Psoas muscle (tissue), 8 donors: ENCODE measurements at regions of chr16 and their contacts with region 1.

Region 1: DNA sequence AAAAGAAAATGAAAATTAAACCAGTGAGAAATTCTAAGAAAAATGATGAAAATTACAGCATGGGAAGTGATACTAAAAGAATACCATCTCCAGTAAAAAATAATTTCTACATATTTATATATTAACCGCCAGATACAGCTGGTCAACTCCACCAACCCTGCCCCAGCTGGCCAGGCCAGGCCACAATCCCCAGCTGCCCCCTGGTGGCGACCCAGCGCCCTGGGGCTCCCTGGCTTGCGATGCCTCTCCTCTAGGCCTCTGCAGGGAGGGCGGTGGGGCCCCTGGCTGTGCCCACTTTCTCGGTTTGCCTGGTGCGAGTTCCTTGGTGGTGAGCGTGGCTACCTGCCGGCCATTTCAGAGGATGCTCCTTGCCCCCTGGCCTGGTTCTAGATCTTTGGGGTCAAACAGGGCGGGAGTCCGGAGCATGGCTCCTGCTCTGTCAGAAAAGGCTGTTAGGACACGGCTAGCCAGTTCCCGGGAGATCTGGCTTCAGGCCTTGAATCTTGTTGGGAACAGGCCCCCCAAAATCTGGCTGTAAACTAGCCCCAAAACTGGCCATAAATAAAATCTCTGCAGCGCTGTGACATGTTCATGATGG is 14.5 kb downstream of the GLIS2 start:
- DNase-seq: peak; percentile 87 to 93
- ATAC-seq: peak; percentile 80 to 87 (median 84)
- H3K4me3 ChIP-seq: no peak overlapping the region
- H3K27ac ChIP-seq: no peak overlapping the region
- H3K4me1 ChIP-seq: peaks cover 21% of the 10 kb centered on the region
- H3K27me3 ChIP-seq: no peaks in the 10 kb centered on the region
- CTCF ChIP-seq: peak; percentile 99

Region 2: DNA sequence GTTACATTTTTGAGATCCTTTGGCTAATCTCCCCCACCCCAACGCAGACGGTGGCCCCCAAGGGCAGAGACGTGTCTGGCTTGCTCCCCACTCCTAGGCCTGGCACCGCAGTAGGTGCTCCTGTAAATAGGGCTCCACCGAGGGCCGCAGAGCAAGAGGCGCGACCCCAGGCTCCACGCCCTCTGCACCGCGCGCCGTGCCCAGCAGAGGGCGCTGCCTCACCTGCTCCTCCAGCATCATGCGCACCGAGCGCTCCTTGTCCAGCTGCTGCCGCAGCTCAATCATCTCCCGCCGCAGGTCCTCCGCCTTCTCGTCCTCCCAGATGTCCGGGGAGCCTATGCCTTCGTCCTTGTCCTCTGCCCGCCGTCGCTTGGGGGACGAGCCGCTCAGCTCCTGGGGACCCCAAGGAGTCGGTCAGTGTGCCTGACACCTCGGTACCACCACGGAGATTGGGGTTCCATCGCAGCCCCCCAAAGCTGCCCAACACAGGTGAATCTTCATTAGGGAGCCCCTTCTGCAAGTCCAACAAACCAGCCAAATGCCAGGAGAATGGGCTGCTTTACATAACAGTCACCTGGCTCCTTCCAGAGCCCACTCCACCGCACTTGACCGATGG is 68.7 kb before region 1 on chr16:
- intact Hi-C with region 1: loop called in 1 of 2 experiments (anchors 10 kb)
- DNase-seq: peak; percentile 41 to 66
- ATAC-seq: peak; percentile 54 to 67 (median 57)
- H3K4me3 ChIP-seq: no peak overlapping the region
- H3K27ac ChIP-seq: no peak overlapping the region
- H3K4me1 ChIP-seq: peaks cover 12% of the 10 kb centered on the region
- H3K27me3 ChIP-seq: no peaks in the 10 kb centered on the region
- CTCF ChIP-seq: peak; percentile 62

Region 3: DNA sequence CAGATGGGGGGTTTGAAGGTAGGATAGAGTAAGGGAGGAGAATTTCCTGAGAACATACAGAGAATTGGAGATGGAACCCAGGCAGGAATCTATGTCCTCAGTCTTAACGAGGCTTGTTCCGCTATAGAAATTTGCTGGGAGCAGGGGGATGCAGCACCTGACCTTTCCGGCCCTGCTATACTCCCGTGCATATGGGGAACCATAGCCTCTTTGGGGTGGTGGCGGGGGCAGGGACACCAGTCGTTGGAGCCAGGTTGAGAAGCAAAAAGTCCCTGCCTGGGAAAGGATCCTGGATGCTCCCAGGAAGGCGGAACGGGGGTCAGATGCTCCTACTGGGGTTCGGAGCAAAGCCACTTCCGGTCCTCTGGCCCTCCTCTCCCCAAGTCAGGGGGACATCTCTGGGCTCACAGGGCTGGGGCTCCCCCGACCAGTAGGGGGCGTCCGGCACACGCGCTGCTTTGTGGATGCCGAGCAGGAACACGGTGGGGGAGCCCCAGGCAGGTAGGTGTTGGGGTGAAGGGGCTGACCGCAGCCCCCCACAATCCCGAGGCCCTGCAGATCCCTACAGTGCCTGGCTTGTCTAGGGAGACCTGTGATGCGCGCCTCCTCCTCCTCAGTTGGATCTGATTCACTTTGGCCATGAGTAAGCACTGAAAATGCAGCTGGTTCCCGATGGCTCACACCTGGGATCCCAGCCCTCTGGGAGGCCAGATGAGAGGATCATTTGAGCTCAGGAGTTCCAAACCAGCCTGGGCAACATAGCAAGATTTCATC is 42.0 kb before region 1 on chr16:
- intact Hi-C with region 1: loop called (anchors 2 kb)
- DNase-seq: peak; percentile 78 to 88
- ATAC-seq: peak; percentile 59 to 75 (median 67)
- H3K4me3 ChIP-seq: peak overlapping the region; percentile 15
- H3K27ac ChIP-seq: no peak overlapping the region
- H3K4me1 ChIP-seq: peaks cover 45% of the 10 kb centered on the region
- H3K27me3 ChIP-seq: peaks cover 0 to 5% (median 0%) of the 10 kb centered on the region in 3 donors
- CTCF ChIP-seq: peak; percentile 91

Region 4: GRCh38 chr16:4425378-4426020 is 95.1 kb after region 1 on chr16 and contains the start of gene DNAJA3:
- intact Hi-C with region 1: no loop called
- DNase-seq: peak; percentile 92 to 96
- ATAC-seq: peak; percentile 96 to 97 (median 97)
- H3K4me3 ChIP-seq: peak within 1 kb of the TSS; percentile 99
- H3K27ac ChIP-seq: peak within 1 kb of the TSS; percentile 99
- H3K4me1 ChIP-seq: peaks cover 18% of the 10 kb centered on the region
- H3K27me3 ChIP-seq: no peaks in the 10 kb centered on the region
- CTCF ChIP-seq: no peak
- total RNA-seq, gene DNAJA3: 77.4 to 110 (median 80.5) TPM